Mammary epithelial cell (primary cell): ENCODE measurements at regions of chr22 and their contacts with region 1.

Region 1: GRCh38 chr22:29346659-29347058 is 31.2 kb upstream of the RASL10A start:
- DNase-seq: no peak
- H3K4me3 ChIP-seq: no peak overlapping the region
- H3K27ac ChIP-seq: no peak overlapping the region
- H3K4me1 ChIP-seq: peaks cover 21% of the 10 kb centered on the region
- H3K27me3 ChIP-seq: no peaks in the 10 kb centered on the region
- CTCF ChIP-seq: no peak

Region 2: DNA sequence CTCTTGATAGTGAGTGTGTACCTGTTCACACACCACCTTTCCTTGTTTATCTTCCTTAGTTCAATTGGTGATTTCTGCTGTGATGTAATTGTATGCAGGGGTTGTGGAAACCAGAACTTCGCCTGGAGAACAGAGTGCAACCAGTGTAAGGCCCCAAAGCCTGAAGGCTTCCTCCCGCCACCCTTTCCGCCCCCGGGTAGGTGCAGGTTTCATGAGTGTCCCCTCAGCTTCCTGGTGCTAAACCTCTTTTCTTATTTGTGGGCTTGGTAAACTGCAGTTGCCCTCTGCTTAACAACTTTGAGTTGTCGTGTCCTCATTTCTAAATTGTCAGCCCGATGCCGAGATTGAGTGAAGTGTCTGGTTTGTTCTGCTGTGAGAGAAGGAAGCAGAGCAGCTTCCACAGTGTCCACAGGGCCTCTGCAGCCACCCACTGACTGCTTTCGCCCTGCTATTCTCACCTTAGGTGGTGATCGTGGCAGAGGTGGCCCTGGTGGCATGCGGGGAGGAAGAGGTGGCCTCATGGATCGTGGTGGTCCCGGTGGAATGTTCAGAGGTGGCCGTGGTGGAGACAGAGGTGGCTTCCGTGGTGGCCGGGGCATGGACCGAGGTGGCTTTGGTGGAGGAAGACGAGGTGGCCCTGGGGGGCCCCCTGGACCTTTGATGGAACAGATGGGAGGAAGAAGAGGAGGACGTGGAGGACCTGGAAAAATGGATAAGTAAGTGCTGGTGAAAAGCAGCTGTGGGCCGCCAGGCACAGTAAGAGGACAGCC is 47.3 kb before region 1 on chr22:
- CTCF ChIA-PET with region 1: no interaction called
- dilution Hi-C with region 1: loop called (anchors 5 kb)
- in situ Hi-C with region 1: no loop called
- intact Hi-C with region 1: no loop called
- DNase-seq: no peak
- H3K4me3 ChIP-seq: no peak overlapping the region
- H3K27ac ChIP-seq: no peak overlapping the region
- H3K4me1 ChIP-seq: no peaks in the 10 kb centered on the region
- H3K27me3 ChIP-seq: no peaks in the 10 kb centered on the region
- CTCF ChIP-seq: no peak

Region 3: GRCh38 chr22:29435236-29436136 is 88.8 kb after region 1 on chr22:
- CTCF ChIA-PET with region 1: no interaction called
- dilution Hi-C with region 1: no loop called
- in situ Hi-C with region 1: no loop called
- intact Hi-C with region 1: no loop called
- DNase-seq: no peak
- H3K4me3 ChIP-seq: no peak overlapping the region
- H3K27ac ChIP-seq: no peak overlapping the region
- H3K4me1 ChIP-seq: no peaks in the 10 kb centered on the region
- H3K27me3 ChIP-seq: no peaks in the 10 kb centered on the region
- CTCF ChIP-seq: no peak